Posterior vena cava (tissue), 2 donors: ENCODE measurements at regions of chr7 and their contacts with region 1.

Region 1: GRCh38 chr7:6160191-6160623 is 112.2 kb downstream of the CYTH3 start:
- DNase-seq: peak; percentile 88

Region 2: GRCh38 chr7:6049780-6050179 is 110.4 kb before region 1 on chr7:
- intact Hi-C with region 1: no loop called
- DNase-seq: no peak

Region 3: DNA sequence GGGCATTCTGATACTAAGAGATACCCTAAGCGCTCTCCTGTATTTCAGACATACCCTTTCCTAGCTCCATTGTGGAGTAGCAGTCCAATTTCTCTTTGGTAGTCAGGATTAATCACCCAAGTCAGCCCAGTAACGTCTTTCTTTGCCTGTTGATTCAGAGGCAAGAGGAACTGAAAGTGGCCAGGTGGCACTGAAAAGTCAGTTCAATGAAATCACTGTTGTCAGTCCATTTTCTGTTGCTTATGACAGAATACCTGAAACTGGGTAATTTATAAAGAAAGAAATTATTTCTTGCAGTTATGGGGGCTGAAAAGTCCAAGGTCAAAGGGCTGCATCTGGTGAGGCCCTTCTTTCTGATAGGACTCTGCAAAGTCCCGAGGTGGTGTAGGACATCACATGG is 88.8 kb before region 1 on chr7:
- intact Hi-C with region 1: no loop called
- DNase-seq: no peak

Region 4: GRCh38 chr7:6260291-6261187 is 100.3 kb after region 1 on chr7:
- intact Hi-C with region 1: loop called (anchors 5 to 10 kb)
- DNase-seq: no peak

Region 5: GRCh38 chr7:6323967-6324701 is 163.9 kb after region 1 on chr7:
- intact Hi-C with region 1: loop called (anchors 2 to 10 kb)
- DNase-seq: no peak